ENCODE measurements at regions of chr5 and their contacts with region 1.

Region 1: DNA sequence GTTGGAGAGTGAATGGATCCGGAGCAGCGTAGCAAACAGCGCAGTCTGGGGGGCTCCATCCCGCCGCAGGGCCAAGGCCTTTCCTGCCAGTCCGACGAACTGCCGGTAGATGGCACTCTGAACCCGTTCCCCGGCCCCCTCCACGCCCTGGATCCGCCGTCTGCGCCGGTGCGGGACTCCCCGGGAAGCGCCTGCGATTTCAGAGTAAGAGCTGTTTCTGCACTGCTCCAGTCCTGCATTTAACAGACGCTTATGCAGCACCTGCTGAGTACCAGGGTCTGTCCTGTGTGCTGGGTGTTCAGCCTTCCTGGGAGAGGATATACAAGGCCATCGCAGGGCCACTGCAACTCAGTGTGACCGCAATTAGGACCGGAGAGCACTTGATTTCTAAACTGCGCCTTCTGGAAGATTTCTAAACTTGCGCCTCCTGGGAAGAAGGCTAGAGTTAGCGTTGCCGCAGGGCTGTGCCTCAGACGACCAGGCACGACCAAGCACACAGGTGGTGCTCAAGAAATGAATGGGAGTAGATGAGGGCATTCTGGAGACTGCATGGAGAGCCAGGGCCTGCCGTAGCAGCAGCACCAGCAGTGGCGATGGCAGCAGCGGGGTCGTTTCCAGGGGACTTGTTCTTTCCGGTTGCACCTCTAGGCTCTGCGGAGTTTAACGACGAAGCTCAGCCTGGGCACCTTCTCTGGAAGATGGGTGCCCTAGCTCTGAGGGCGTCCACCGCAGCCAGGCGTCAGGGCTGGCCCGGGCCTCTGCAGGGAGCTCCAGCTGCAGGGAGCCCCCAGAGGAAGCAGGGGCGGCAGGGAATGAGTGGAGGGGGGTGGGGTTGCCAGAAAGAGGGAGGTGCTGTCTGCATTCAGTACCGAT is 14.3 kb upstream of the TIFAB start:
- DNase-seq: no peak
- H3K4me3 ChIP-seq: peak overlapping the region in 1 of 2 donors; percentile 32
- H3K27ac ChIP-seq: no peak overlapping the region
- H3K4me1 ChIP-seq: no peaks in the 10 kb centered on the region
- H3K27me3 ChIP-seq: no peaks in the 10 kb centered on the region
- CTCF ChIP-seq: peak; percentile 60 to 89 (median 81)
- POLR2A ChIP-seq: no peak

Region 2: DNA sequence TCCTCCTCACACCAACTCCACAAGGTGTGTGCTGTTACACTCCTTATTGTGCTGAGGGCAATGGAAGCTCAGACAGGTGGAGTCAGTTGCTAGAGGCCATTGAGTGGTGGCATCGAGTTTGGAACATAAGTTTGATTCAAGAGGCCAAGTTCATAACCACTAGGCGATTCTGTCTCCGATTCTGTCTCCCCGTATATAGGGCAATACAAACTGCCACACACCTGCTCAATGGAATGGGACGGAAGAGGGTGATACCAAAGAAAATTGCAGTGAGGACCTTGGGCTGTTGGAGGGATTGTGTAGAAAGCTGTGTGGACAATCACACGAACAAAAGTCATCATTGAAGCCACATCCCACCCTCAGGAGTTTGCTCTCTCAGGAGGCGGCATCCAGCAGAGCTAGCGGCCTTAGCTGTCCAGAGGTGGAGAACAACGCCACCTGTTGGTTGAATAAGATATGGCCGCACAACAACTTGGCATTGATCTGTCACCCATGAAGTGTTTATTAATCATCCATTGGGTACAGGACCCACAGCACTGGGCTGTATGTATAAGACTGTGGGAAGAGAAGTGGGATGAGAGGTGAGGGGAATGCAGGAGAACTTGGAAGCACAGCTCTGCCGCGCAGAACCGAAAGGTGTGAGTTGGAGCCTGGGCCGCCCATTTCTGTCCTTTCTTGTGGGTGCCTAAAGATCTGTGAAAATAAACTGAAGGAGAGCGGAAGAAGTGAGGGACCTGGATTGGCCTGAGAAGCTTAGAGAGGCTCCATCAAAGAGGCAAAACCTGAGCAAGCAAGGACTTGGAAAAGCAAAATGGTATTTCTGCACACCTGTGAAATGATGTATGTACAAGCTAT is 85.4 kb after region 1 on chr5:
- intact Hi-C with region 1: loop called (anchors 5 kb)
- DNase-seq: no peak
- H3K4me3 ChIP-seq: no peak overlapping the region
- H3K27ac ChIP-seq: no peak overlapping the region
- H3K4me1 ChIP-seq: no peaks in the 10 kb centered on the region
- H3K27me3 ChIP-seq: no peaks in the 10 kb centered on the region
- CTCF ChIP-seq: peak; percentile 35 to 86 (median 73)
- POLR2A ChIP-seq: no peak